Stomach (tissue), 19 donors: ENCODE measurements at regions of chr17 and their contacts with region 1.

Region 1: GRCh38 chr17:22300731-22301352 is 608.5 kb downstream of the KCNJ18 start:
- DNase-seq: no peak
- H3K4me3 ChIP-seq: no peak overlapping the region
- H3K27ac ChIP-seq: no peak overlapping the region
- H3K4me1 ChIP-seq: no peaks in the 10 kb centered on the region
- H3K27me3 ChIP-seq: no peaks in the 10 kb centered on the region
- CTCF ChIP-seq: no peak
- EP300 ChIP-seq: no peak
- POLR2A ChIP-seq: no peak

Region 2: GRCh38 chr17:22242472-22242871 is 58.4 kb before region 1 on chr17:
- intact Hi-C with region 1: loop called (anchors 10 kb)
- DNase-seq: no peak
- H3K4me3 ChIP-seq: no peak overlapping the region
- H3K27ac ChIP-seq: no peak overlapping the region
- H3K4me1 ChIP-seq: no peaks in the 10 kb centered on the region
- H3K27me3 ChIP-seq: no peaks in the 10 kb centered on the region
- CTCF ChIP-seq: no peak
- EP300 ChIP-seq: no peak
- POLR2A ChIP-seq: no peak